Heart right ventricle (tissue), 16 donors: ENCODE measurements at regions of chr19 and their contacts with region 1.

Region 1: DNA sequence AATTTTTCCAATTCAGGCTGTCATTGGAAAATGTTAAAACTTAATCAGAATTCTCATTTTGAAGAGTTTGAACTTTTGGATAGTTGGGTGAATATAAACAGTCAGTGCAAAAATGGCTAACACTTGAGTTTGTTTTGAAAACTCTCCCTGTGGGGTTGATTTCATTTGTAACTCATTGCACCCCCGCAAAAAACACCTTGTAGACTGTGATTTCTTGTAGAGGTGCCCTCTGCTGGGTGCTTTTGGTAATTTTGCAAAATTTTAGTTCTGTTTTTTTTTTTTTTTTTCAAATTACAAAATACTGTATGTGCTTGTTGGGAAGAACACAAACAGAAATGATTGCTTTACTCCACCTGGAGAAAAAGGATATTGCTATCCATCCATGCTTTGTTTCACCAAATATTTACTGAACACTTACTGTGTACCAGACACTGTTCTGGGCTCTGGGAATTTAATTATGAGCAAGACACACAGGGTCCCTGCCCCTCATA is 28.2 kb upstream of the GPI start:
- DNase-seq: peak in 1 of 2 donors; percentile 44
- ATAC-seq: peak in 1 of 8 donors; percentile 28
- H3K4me3 ChIP-seq: no peak overlapping the region
- H3K27ac ChIP-seq: peak overlapping the region in 3 of 10 donors; percentile 13 to 52 (median 21)
- H3K4me1 ChIP-seq: peaks cover 0 to 40% (median 24%) of the 10 kb centered on the region in 9 donors
- H3K27me3 ChIP-seq: no peaks in the 10 kb centered on the region
- CTCF ChIP-seq: peak; percentile 49 to 80 (median 67)

Region 2: DNA sequence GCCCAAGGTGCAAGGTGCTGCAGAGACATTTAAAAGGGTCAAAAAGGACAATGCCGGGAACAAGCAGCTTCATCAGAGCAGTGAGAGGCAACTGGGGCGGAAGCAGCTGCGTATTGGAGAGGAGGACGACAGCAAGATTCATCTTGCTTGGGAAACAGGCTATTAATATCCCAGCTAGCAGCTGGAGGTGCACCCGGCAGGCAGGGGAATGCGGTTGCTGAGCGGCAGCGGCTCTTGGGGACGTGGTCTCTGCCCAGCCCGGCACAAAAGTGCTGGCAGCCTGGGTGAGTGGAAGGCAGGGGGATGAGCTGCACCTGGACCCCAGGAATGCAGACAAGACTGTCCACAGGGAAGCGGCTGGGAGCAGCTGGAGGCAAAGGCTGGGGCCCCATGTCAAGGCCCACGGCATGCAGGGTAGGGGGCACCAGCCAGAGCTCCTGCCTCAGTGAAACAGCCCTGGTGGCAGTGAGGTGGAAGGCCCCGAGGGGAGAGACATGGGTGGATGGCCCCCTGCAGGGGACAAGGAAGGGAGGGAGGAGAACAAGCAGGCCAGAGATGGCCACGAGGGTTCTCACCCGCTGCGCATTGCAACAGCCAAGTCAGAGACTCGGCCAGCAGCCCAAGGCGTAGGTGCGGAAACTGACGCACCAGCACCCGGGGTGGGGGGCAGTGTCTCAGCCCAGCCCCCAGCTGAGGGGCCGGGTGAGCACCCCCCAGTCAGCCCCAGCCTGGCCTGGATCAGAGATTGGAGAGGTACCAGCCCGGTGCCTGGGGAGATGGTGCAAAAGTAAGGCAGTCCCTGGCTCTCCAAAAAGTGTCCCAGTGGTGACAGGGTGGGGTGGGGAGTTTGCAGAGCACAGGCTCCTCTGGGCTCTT is 849.7 kb before region 1 on chr19:
- intact Hi-C with region 1: no loop called
- DNase-seq: no peak
- ATAC-seq: peak in 7 of 8 donors; percentile 51 to 82 (median 70)
- H3K4me3 ChIP-seq: no peak overlapping the region
- H3K27ac ChIP-seq: peak overlapping the region in 1 of 10 donors; percentile 16
- H3K4me1 ChIP-seq: peaks cover 0 to 12% (median 0%) of the 10 kb centered on the region in 9 donors
- H3K27me3 ChIP-seq: no peaks in the 10 kb centered on the region
- CTCF ChIP-seq: no peak

Region 3: GRCh38 chr19:34241513-34242337 is 95.1 kb before region 1 on chr19:
- intact Hi-C with region 1: loop called in 1 of 10 experiments (anchors 10 kb)
- DNase-seq: no peak
- ATAC-seq: no peak
- H3K4me3 ChIP-seq: no peak overlapping the region
- H3K27ac ChIP-seq: no peak overlapping the region
- H3K4me1 ChIP-seq: peaks cover 0 to 18% (median 5%) of the 10 kb centered on the region in 9 donors
- H3K27me3 ChIP-seq: no peaks in the 10 kb centered on the region
- CTCF ChIP-seq: no peak

Region 4: DNA sequence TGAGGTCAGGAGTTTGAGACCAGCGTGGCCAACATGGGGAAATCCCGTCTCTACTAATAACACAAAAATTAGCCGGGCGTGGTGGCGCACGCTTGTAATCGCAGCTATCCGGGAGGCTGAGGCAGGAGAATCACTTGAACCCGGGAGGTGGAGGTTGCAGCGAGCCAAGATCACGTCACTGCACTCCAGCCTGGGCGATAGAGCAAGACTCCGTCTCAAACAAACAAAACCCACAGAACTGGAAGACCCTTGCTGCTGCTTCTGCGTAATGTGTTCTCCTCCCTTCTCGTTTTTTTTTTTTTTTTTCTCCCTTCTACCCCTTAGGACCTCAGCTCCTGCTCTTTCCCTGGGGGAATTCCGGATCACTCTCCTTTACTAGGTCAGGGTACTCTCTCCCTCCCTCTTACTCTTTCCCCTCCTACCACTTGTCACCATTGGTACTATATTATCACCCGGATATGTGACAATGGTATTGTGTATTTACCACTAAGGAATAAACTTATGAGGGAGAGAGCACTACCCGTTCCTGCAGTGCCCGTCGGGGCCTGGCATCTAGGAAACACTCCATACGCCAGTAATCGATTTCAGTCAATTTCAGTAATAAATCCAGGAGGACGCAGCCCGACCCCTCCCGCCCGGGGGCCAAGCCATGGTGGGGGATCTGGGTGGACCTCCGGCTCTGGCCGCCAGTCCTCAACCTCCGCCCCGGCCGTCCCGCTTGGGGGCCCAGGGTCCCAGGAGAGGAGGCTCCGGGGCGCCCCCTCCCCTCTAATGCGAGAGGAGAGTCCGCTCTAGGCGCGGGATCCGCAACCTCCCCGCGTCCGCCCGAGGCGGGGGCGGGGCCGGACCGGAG is 82.9 kb before region 1 on chr19:
- intact Hi-C with region 1: loop called in 6 of 10 experiments (anchors 5 to 10 kb)
- DNase-seq: peak; percentile 88 to 90
- ATAC-seq: peak; percentile 32 to 96 (median 92)
- H3K4me3 ChIP-seq: peak overlapping the region; percentile 78 to 100 (median 96)
- H3K27ac ChIP-seq: peak overlapping the region; percentile 92 to 100 (median 96)
- H3K4me1 ChIP-seq: peaks cover 0 to 35% (median 23%) of the 10 kb centered on the region in 9 donors
- H3K27me3 ChIP-seq: peaks cover 0 to 17% (median 0%) of the 10 kb centered on the region in 7 donors
- CTCF ChIP-seq: peak in 1 of 9 donors; percentile 9

Region 5: GRCh38 chr19:34269968-34270621 is 66.7 kb before region 1 on chr19:
- intact Hi-C with region 1: loop called in 6 of 10 experiments (anchors 5 to 10 kb)
- DNase-seq: peak; percentile 57 to 79
- ATAC-seq: peak; percentile 86 to 91 (median 88)
- H3K4me3 ChIP-seq: peak overlapping the region in 7 of 10 donors; percentile 4 to 55 (median 31)
- H3K27ac ChIP-seq: peak overlapping the region; percentile 55 to 94 (median 88)
- H3K4me1 ChIP-seq: peaks cover 7 to 93% (median 64%) of the 10 kb centered on the region in 9 donors
- H3K27me3 ChIP-seq: no peaks in the 10 kb centered on the region
- CTCF ChIP-seq: no peak